HCT116 (cell line): ENCODE measurements at regions of chr4 and their contacts with region 1.

Region 1: GRCh38 chr4:32290102-32290501 is 1569.9 kb downstream of the PCDH7 start:
- DNase-seq: no peak
- ATAC-seq: no peak
- H3K4me3 ChIP-seq: no peak overlapping the region
- H3K27ac ChIP-seq: no peak overlapping the region
- H3K4me1 ChIP-seq: no peaks in the 10 kb centered on the region
- H3K27me3 ChIP-seq: no peaks in the 10 kb centered on the region
- CTCF ChIP-seq: no peak
- POLR2A ChIP-seq: no peak
- RAD21 ChIP-seq: no peak

Region 2: DNA sequence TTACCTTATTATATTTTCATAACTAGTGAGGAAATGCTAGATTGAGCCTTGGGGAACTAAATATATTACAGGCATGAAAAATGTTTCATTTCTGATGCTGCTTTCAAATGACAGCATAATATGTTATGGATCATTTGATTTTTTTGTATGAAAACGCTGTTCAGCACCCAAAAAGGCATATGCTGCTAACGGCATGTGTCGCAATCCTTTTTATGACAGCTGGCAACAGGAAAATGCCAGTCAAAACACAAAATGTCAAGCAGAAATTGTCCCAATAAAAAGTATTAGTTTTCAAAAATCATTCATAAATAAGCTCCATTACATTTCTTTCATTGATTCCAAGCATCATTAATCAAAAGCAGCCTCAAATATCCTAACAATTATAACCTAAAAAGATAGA is 325.4 kb before region 1 on chr4:
- CTCF ChIA-PET with region 1: no interaction called
- POLR2A ChIA-PET with region 1: no interaction called
- RAD21 ChIA-PET with region 1: no interaction called
- intact Hi-C with region 1: loop called (anchors 10 kb)
- DNase-seq: no peak
- ATAC-seq: no peak
- H3K4me3 ChIP-seq: no peak overlapping the region
- H3K27ac ChIP-seq: no peak overlapping the region
- H3K4me1 ChIP-seq: no peaks in the 10 kb centered on the region
- H3K27me3 ChIP-seq: no peaks in the 10 kb centered on the region
- CTCF ChIP-seq: no peak
- POLR2A ChIP-seq: no peak
- RAD21 ChIP-seq: no peak

Region 3: GRCh38 chr4:32589853-32590252 is 299.8 kb after region 1 on chr4:
- CTCF ChIA-PET with region 1: no interaction called
- POLR2A ChIA-PET with region 1: no interaction called
- RAD21 ChIA-PET with region 1: no interaction called
- intact Hi-C with region 1: no loop called
- DNase-seq: no peak
- ATAC-seq: no peak
- H3K4me3 ChIP-seq: no peak overlapping the region
- H3K27ac ChIP-seq: no peak overlapping the region
- H3K4me1 ChIP-seq: no peaks in the 10 kb centered on the region
- H3K27me3 ChIP-seq: no peaks in the 10 kb centered on the region
- CTCF ChIP-seq: no peak
- POLR2A ChIP-seq: no peak
- RAD21 ChIP-seq: no peak